ENCODE measurements at regions of chr1 and their contacts with region 1.

Region 1: GRCh38 chr1:159798893-159799292 is 3.3 kb upstream of the FCRL6 start:
- DNase-seq: peak; percentile 76
- ATAC-seq: peak; percentile 88

Region 2: GRCh38 chr1:159891275-159892157 is 92.6 kb after region 1 on chr1:
- intact Hi-C with region 1: loop called (anchors 10 kb)
- DNase-seq: peak; percentile 88
- ATAC-seq: peak; percentile 95